ENCODE measurements at regions of chr2 and their contacts with region 1.

Region 1: GRCh38 chr2:120867290-120868241 is 131.9 kb downstream of the GLI2 start:
- DNase-seq: peak; percentile 57 to 94
- H3K4me3 ChIP-seq: peak overlapping the region; percentile 57 to 65
- H3K27ac ChIP-seq: peak overlapping the region; percentile 92 to 93
- H3K4me1 ChIP-seq: peaks cover 4 to 21% of the 10 kb centered on the region in 2 donors
- H3K27me3 ChIP-seq: no peaks in the 10 kb centered on the region
- CTCF ChIP-seq: peak in 1 of 3 experiments; percentile 12

Region 2: GRCh38 chr2:120735746-120736170 is 131.8 kb before region 1 on chr2 and contains the start of gene GLI2:
- intact Hi-C with region 1: loop called (anchors 2 kb)
- DNase-seq: peak in 1 of 2 donors; percentile 82
- H3K4me3 ChIP-seq: peak within 1 kb of the TSS; percentile 51 to 67
- H3K27ac ChIP-seq: peak within 1 kb of the TSS; percentile 74 to 85
- H3K4me1 ChIP-seq: peaks cover 0 to 11% of the 10 kb centered on the region in 2 donors
- H3K27me3 ChIP-seq: no peaks in the 10 kb centered on the region
- CTCF ChIP-seq: peak; percentile 63 to 73 (median 72)
- total RNA-seq, gene GLI2: 23.1 TPM

Region 3: GRCh38 chr2:120803764-120804335 is 63.7 kb before region 1 on chr2:
- intact Hi-C with region 1: no loop called
- DNase-seq: no peak
- H3K4me3 ChIP-seq: no peak overlapping the region
- H3K27ac ChIP-seq: peak overlapping the region; percentile 71 to 81
- H3K4me1 ChIP-seq: peaks cover 17 to 37% of the 10 kb centered on the region in 2 donors
- H3K27me3 ChIP-seq: no peaks in the 10 kb centered on the region
- CTCF ChIP-seq: no peak

Region 4: GRCh38 chr2:120818441-120818920 is 49.1 kb before region 1 on chr2:
- intact Hi-C with region 1: loop called (anchors 2 kb)
- DNase-seq: peak in 1 of 2 donors; percentile 86
- H3K4me3 ChIP-seq: no peak overlapping the region
- H3K27ac ChIP-seq: peak overlapping the region; percentile 0 to 5
- H3K4me1 ChIP-seq: peaks cover 0 to 8% of the 10 kb centered on the region in 2 donors
- H3K27me3 ChIP-seq: no peaks in the 10 kb centered on the region
- CTCF ChIP-seq: no peak

Region 5: GRCh38 chr2:120892967-120893667 is 25.6 kb after region 1 on chr2:
- intact Hi-C with region 1: loop called (anchors 2 kb)
- DNase-seq: no peak
- H3K4me3 ChIP-seq: peak overlapping the region in 1 of 2 donors; percentile 18
- H3K27ac ChIP-seq: peak overlapping the region; percentile 70 to 79
- H3K4me1 ChIP-seq: peaks cover 0 to 22% of the 10 kb centered on the region in 2 donors
- H3K27me3 ChIP-seq: no peaks in the 10 kb centered on the region
- CTCF ChIP-seq: no peak

Region 6: GRCh38 chr2:120914839-120915521 is 47.4 kb after region 1 on chr2:
- intact Hi-C with region 1: loop called (anchors 1 kb)
- DNase-seq: peak; percentile 77 to 95
- H3K4me3 ChIP-seq: peak overlapping the region in 1 of 2 donors; percentile 22
- H3K27ac ChIP-seq: peak overlapping the region; percentile 84 to 90
- H3K4me1 ChIP-seq: peaks cover 30 to 51% of the 10 kb centered on the region in 2 donors
- H3K27me3 ChIP-seq: no peaks in the 10 kb centered on the region
- CTCF ChIP-seq: peak in 2 of 3 experiments; percentile 22 to 45

Region 7: GRCh38 chr2:120934574-120935340 is 67.2 kb after region 1 on chr2:
- intact Hi-C with region 1: loop called (anchors 2 kb)
- DNase-seq: peak in 1 of 2 donors; percentile 76
- H3K4me3 ChIP-seq: no peak overlapping the region
- H3K27ac ChIP-seq: peak overlapping the region; percentile 52 to 76
- H3K4me1 ChIP-seq: peaks cover 24 to 54% of the 10 kb centered on the region in 2 donors
- H3K27me3 ChIP-seq: no peaks in the 10 kb centered on the region
- CTCF ChIP-seq: no peak

Region 8: DNA sequence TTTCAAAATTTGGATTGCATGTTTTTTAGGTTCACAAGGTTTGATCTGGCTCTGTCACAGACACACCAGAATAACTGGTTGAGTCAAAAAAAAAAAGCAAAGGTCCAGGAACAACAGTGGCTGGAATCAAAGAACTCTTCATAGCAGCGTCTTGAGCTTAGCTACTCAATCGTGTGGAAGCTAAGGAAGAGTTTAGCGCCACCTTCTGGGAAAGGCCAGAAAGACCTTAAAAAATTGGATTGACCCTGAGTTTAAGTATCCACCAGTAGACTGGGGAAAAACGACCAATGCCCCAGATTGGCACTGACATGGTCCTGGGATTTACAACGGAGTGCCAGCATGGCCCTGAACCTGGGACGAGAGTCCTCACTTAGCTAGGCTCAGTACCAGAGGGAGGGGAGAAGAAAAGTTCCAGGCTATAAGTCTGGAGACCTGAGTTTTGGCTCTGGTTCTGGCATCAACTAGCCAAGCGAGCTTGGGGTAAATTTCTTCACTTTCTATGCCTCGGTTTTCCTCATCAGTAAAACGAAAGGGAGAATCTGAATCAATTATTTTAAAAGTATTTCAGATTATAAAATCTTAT is 488.6 kb after region 1 on chr2:
- intact Hi-C with region 1: loop called (anchors 10 kb)
- DNase-seq: no peak
- H3K4me3 ChIP-seq: no peak overlapping the region
- H3K27ac ChIP-seq: peak overlapping the region; percentile 28 to 45
- H3K4me1 ChIP-seq: peaks cover 0 to 27% of the 10 kb centered on the region in 2 donors
- H3K27me3 ChIP-seq: no peaks in the 10 kb centered on the region
- CTCF ChIP-seq: peak; percentile 46 to 69 (median 58)